Activated T-helper 1 cell treated with anti-CD3 and anti-CD28 coated beads, Interleukin-12 subunit alpha, Interleukin-12 subunit beta, Interleukin-2, Interleukin-4 antibody, amounts not matched to agents 30 ng/mL and 10 ng/mL and 1 ng/mL, durations not matched to agents 14 hours and 24 hours and 36 hours (primary cell): ENCODE measurements at regions of chr21 and their contacts with region 1.

Region 1: GRCh38 chr21:29195981-29196669 is 65.7 kb downstream of the MAP3K7CL start:
- DNase-seq: peak; percentile 77
- H3K4me3 Mint-ChIP-seq: peak overlapping the region; percentile 80
- H3K27ac Mint-ChIP-seq: peak overlapping the region; percentile 88
- H3K4me1 Mint-ChIP-seq: peaks cover 44% of the 10 kb centered on the region
- H3K27me3 Mint-ChIP-seq: peaks cover 2% of the 10 kb centered on the region

Region 2: DNA sequence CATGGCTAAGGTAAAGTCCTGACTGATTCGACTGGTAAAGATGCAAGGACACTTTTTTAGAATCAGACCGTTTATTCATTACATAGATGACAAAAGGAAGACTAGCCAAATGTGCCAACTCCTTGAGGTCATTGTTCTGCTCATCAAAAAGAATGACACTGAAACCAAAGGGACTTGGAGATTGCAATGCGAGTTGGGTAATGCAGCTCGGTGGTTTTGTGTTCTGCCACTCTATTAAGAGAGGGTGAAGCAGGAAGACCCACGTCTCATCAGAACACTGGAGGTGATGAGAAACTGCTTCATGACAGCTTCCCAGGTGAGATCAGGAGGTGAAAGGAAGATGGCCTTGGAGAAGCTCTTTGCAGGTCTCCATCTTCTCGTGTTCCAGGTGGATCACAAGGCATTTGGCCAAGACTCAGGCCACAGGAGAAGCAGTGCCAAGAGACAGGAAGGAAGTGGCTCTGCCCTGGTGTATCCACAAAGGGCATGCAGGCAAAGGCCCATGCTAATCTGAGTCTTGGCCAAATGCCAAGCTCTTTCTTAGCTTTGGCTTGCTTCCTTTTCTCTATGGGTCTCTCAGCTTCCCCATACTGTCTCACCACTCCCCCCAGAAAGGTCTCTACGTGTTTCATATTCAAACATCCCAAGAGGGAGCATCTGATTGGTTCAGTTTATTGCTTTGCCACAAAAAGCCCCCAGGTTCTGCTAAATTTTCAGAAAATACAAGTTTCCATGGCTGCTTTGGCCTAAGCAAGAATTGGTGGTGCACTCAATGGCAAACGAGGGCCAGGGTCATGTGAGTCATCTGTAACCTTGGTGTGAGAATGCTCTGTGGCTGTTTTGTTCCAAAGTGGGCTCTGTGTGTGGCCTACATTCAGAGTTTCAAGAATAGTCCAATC is 117.0 kb before region 1 on chr21:
- intact Hi-C with region 1: loop called (anchors 1 kb)
- DNase-seq: no peak
- H3K4me3 Mint-ChIP-seq: peak overlapping the region; percentile 86
- H3K27ac Mint-ChIP-seq: peak overlapping the region; percentile 65
- H3K4me1 Mint-ChIP-seq: peaks cover 47% of the 10 kb centered on the region
- H3K27me3 Mint-ChIP-seq: peaks cover 2% of the 10 kb centered on the region

Region 3: GRCh38 chr21:29181799-29182470 is 14.2 kb before region 1 on chr21:
- intact Hi-C with region 1: loop called (anchors 1 kb)
- DNase-seq: no peak
- H3K4me3 Mint-ChIP-seq: peak overlapping the region; percentile 51
- H3K27ac Mint-ChIP-seq: peak overlapping the region; percentile 57
- H3K4me1 Mint-ChIP-seq: peaks cover 27% of the 10 kb centered on the region
- H3K27me3 Mint-ChIP-seq: no peaks in the 10 kb centered on the region

Region 4: DNA sequence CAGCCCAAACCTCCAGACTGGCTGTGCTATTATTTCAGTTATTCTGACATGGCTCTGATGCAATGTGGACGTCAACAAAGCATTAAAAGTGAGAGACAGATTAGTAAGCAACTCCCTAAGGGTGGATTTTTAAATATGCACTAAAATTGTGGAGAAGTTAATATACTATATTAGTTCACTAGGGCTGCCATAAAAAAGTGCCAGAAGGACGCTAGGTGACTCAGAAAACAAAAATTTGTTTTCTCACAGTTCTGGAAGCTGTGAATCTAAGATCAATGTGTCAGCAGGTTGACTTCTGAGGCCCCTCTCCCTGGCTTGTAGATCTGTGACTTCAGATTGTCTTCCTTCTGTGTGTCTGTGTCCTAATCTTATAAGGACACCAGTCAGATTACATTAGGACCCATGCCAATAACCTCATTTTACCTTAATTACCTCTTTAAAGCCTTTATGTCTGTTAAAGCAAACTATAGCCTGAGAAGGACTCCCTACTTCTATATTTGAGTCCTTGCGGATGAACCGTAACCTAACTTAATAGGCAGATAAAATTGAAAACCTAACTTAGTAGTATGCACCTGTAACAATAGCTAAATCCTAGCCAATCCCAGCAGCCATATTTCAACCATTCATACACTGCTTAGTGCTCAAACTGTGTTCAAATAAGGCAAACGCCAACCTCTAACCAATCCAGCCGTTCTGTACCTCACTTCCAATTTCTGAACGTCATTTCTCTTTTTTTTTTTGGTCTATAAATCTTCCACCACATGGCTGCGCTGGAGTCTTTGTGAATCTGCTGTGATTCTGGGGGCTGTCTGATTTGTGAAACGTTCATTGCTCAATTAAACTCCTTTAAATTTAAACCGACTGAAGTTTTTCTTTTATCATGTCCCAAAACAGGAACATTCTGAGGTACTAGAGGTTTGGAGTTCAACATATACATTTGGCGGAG is 36.7 kb after region 1 on chr21:
- intact Hi-C with region 1: loop called (anchors 1 kb)
- DNase-seq: no peak
- H3K4me3 Mint-ChIP-seq: no peak overlapping the region
- H3K27ac Mint-ChIP-seq: no peak overlapping the region
- H3K4me1 Mint-ChIP-seq: peaks cover 51% of the 10 kb centered on the region
- H3K27me3 Mint-ChIP-seq: peaks cover 30% of the 10 kb centered on the region

Region 5: DNA sequence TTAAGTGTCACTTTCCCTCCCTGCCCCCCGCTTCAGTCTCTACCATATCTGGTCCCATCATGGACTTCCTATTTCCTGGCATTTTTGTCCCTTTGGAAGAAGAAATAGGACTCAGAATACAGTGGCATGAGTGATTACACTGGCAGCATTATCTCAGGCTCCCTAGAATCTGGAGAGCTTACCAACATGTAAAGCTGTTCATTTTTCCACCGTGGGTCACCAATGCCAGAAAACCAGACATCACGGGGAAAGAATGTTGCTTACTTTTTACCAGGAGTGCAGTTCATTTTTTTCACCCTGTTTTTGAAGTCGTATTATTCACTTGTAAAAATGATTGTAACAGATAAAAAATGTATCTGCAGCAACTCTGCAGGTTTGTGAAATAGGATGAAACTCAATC is 147.4 kb after region 1 on chr21:
- intact Hi-C with region 1: loop called (anchors 1 kb)
- DNase-seq: no peak
- H3K4me3 Mint-ChIP-seq: no peak overlapping the region
- H3K27ac Mint-ChIP-seq: no peak overlapping the region
- H3K4me1 Mint-ChIP-seq: peaks cover 32% of the 10 kb centered on the region
- H3K27me3 Mint-ChIP-seq: no peaks in the 10 kb centered on the region

Region 6: DNA sequence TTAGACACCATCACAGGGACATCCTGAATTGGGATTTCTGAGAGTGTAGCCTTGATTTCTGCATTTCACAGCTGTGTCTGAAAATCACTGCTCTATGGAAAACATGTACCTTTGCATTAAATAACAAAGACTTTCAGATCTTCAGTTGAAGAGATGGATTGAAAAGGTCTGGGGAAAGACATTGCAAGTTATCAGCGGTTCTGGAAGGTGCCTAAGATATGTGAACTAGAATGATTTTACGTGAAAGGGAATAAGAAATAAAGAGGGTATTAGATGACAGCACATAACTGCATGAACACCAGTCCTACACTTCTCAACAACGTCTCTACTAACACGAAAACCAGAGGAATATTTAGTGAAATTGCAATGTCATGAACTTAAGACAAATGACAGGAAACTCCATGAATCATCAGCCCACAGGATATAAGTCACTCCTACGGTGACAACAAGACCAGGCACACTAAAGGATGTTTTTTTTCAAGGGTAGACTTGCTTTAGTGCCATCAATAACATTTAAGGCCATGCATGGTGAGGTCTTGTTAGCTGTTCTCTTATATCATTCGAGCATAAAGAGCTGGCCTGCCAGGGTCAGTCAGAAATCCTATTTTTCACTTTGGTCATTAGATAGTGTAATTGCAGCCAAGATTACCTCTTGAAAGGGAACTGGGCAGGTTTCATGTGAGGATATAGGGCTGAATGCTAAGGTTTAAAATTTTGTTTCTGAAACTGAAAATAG is 460.5 kb after region 1 on chr21:
- intact Hi-C with region 1: loop called (anchors 10 kb)
- DNase-seq: peak; percentile 14
- H3K4me3 Mint-ChIP-seq: peak overlapping the region; percentile 45
- H3K27ac Mint-ChIP-seq: peak overlapping the region; percentile 82
- H3K4me1 Mint-ChIP-seq: peaks cover 39% of the 10 kb centered on the region
- H3K27me3 Mint-ChIP-seq: no peaks in the 10 kb centered on the region